CD4-positive, alpha-beta memory T cell (primary cell): ENCODE measurements at regions of chr3 and their contacts with region 1.

Region 1: DNA sequence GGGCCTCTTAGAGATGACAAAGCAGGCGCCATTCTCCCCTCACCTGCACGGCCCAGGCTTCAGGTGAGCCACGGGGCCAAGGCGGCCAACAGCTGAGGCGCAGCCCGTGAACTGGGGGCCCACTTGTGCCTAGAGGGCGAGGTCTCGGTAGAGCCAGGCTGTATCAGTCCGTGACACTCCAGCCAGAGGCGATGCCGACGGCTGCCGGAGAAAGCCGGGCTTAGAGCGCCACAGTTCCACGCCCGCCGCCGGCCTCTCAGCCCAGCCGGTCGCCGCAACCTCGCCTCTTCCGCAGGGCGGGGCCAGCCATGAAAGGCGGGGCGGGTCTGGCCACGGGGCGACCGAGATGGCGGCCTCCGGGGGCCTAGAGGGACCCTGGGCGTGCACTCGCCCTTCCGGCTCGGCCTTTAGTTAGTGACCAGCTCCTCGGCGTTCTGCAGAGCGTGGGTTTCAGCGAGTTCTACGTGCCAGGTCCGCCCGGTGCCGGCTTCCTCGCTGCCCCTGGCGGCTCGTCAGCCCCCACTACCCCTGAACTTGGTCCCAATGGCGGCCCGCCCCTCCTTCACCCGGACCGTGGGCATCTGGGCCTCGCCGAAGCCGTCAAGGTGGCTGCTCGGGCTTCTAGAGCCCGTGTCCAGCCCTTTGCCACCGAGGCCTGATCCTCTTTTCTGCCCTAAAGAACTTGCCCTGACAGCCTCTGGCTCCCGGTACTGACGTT is at the start of gene ZNF621:
- DNase-seq: peak; percentile 67 to 83 (median 77)
- H3K4me3 ChIP-seq: peak within 1 kb of the TSS; percentile 62 to 89
- H3K4me3 Mint-ChIP-seq: peak within 1 kb of the TSS; percentile 92 to 97 (median 95)
- H3K27ac ChIP-seq: peak within 1 kb of the TSS; percentile 75
- H3K27ac Mint-ChIP-seq: peak within 1 kb of the TSS; percentile 79 to 98 (median 97)
- H3K4me1 ChIP-seq: peaks cover 21% of the 10 kb centered on the region
- H3K4me1 Mint-ChIP-seq: peaks cover 19 to 34% (median 28%) of the 10 kb centered on the region in 4 donors
- H3K27me3 ChIP-seq: no peaks in the 10 kb centered on the region
- H3K27me3 Mint-ChIP-seq: no peaks in the 10 kb centered on the region
- total RNA-seq, gene ZNF621: 23.7 to 27.4 TPM

Region 2: DNA sequence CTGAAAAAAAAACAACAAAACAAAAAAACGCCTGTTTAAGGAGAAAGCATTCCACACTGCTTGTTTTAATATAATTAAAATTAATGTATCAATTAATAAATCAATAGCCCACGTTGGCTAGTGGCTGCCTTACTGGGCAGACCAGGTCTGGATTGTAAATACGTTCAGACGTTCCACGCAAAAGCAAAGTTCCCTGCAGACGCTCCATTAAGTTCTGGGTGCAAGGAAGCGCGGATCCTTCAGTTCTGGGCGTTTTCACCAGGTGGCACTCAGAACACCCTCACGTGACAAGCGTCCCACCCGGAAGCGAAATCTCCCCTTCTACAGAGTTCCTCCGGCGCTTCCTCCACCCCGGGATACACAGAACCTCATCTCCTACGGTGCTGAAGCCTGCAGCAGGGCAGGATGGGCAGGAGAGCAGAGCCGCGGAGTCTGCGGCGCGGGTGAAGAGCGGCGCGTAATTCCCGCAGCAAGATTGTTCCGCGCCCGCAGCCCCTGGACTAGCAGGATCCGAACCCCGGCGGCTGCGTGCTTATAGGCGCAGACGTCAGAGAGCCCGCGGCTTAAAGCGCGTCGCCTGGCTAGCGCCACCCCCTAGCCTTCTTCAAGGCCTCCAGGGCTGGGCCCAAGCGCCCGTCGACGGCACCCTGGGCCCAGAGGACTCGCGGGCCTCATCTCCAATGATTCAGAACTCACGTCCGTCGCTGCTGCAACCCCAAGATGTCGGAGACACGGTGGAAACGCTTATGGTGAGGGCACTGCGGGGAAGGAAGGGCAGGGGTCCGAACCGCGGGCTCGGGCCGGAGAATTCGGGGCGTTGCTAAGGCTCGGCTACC is 1141.5 kb before region 1 on chr3 and contains the start of gene SLC25A38:
- CTCF ChIA-PET with region 1: no interaction called
- POLR2A ChIA-PET with region 1: no interaction called
- intact Hi-C with region 1: loop called (anchors 10 kb)
- DNase-seq: peak; percentile 82 to 90 (median 85)
- H3K4me3 ChIP-seq: peak within 1 kb of the TSS; percentile 91 to 92
- H3K4me3 Mint-ChIP-seq: peak within 1 kb of the TSS; percentile 96 to 100 (median 98)
- H3K27ac ChIP-seq: peak within 1 kb of the TSS; percentile 93
- H3K27ac Mint-ChIP-seq: peak within 1 kb of the TSS; percentile 97 to 100 (median 100)
- H3K4me1 ChIP-seq: peaks cover 46% of the 10 kb centered on the region
- H3K4me1 Mint-ChIP-seq: peaks cover 31 to 53% (median 44%) of the 10 kb centered on the region in 4 donors
- H3K27me3 ChIP-seq: no peaks in the 10 kb centered on the region
- H3K27me3 Mint-ChIP-seq: no peaks in the 10 kb centered on the region
- total RNA-seq, gene SLC25A38: 46.0 to 53.5 TPM

Region 3: GRCh38 chr3:40476478-40477470 is 48.0 kb before region 1 on chr3 and contains the start of gene ZNF619:
- CTCF ChIA-PET with region 1: interaction called, 6 read pairs
- POLR2A ChIA-PET with region 1: interaction called, 27 read pairs
- intact Hi-C with region 1: loop called (anchors 1 kb)
- DNase-seq: peak; percentile 52 to 67 (median 59)
- H3K4me3 ChIP-seq: peak within 1 kb of the TSS; percentile 19 to 60
- H3K4me3 Mint-ChIP-seq: peak within 1 kb of the TSS; percentile 91 to 95 (median 94)
- H3K27ac ChIP-seq: peak within 1 kb of the TSS; percentile 68
- H3K27ac Mint-ChIP-seq: peak within 1 kb of the TSS; percentile 82 to 98 (median 95)
- H3K4me1 ChIP-seq: peaks cover 16% of the 10 kb centered on the region
- H3K4me1 Mint-ChIP-seq: peaks cover 14 to 38% (median 22%) of the 10 kb centered on the region in 4 donors
- H3K27me3 ChIP-seq: no peaks in the 10 kb centered on the region
- H3K27me3 Mint-ChIP-seq: no peaks in the 10 kb centered on the region
- total RNA-seq, gene ZNF619: 14.0 to 16.6 TPM

Region 4: GRCh38 chr3:40505599-40506462 is 18.9 kb before region 1 on chr3 and contains the start of gene ZNF620:
- CTCF ChIA-PET with region 1: interaction called, 8 read pairs
- POLR2A ChIA-PET with region 1: interaction called, 28 read pairs
- intact Hi-C with region 1: loop called (anchors 1 kb)
- DNase-seq: peak; percentile 26 to 57 (median 34)
- H3K4me3 ChIP-seq: peak within 1 kb of the TSS; percentile 74 to 92
- H3K4me3 Mint-ChIP-seq: peak within 1 kb of the TSS; percentile 95 to 98 (median 97)
- H3K27ac ChIP-seq: peak within 1 kb of the TSS; percentile 44
- H3K27ac Mint-ChIP-seq: peak within 1 kb of the TSS; percentile 70 to 95 (median 92)
- H3K4me1 ChIP-seq: peaks cover 8% of the 10 kb centered on the region
- H3K4me1 Mint-ChIP-seq: peaks cover 8 to 21% (median 14%) of the 10 kb centered on the region in 4 donors
- H3K27me3 ChIP-seq: no peaks in the 10 kb centered on the region
- H3K27me3 Mint-ChIP-seq: no peaks in the 10 kb centered on the region
- total RNA-seq, gene ZNF620: 3.7 to 3.8 TPM

Region 5: GRCh38 chr3:42403737-42404136 is 1879.0 kb after region 1 on chr3:
- CTCF ChIA-PET with region 1: no interaction called
- POLR2A ChIA-PET with region 1: no interaction called
- intact Hi-C with region 1: no loop called
- DNase-seq: no peak
- H3K4me3 ChIP-seq: no peak overlapping the region
- H3K4me3 Mint-ChIP-seq: no peak overlapping the region
- H3K27ac ChIP-seq: no peak overlapping the region
- H3K27ac Mint-ChIP-seq: no peak overlapping the region
- H3K4me1 ChIP-seq: no peaks in the 10 kb centered on the region
- H3K4me1 Mint-ChIP-seq: peaks cover 0 to 4% (median under 1%) of the 10 kb centered on the region in 4 donors
- H3K27me3 ChIP-seq: no peaks in the 10 kb centered on the region
- H3K27me3 Mint-ChIP-seq: peaks cover 2 to 5% of the 10 kb centered on the region in 2 donors